B cell (primary cell): ENCODE measurements at regions of chr15 and their contacts with region 1.

Region 1: DNA sequence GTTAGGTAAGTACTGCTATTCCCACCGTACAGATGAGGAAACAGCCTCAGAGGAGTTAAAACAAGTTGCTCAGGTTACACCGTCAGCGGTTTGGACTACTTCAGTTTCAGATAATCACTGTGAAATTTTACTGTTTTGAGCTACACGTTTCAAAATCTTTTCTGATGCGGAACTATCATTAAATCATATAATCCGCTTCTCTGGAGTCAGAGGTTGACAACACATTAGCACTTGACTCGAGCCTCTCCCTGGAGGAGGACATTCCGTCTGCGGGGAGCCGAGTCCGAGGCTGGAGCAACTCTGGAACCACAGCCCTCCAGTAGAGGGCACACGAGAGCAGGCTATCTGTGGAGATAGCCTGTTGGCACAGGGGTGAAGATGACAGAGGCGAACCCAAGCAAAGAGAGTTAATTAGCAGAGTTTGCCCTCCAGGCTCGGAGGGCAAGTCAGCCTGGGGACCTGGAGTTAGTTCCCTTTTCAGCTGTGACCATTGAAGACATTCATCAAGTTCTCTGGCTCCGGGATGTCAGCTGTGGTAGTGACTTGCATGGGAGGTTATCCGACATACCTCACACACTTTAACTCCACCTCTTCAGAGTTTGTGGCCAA is 131.2 kb downstream of the IGF1R start:
- DNase-seq: peak; percentile 76
- ATAC-seq: peak; percentile 84
- H3K4me3 ChIP-seq: no peak overlapping the region
- H3K4me3 Mint-ChIP-seq: peak overlapping the region; percentile 24
- H3K27ac ChIP-seq: no peak overlapping the region
- H3K27ac Mint-ChIP-seq: no peak overlapping the region
- H3K4me1 ChIP-seq: peaks cover 15 to 30% of the 10 kb centered on the region in 2 donors
- H3K4me1 Mint-ChIP-seq: peaks cover 19% of the 10 kb centered on the region
- H3K27me3 ChIP-seq: no peaks in the 10 kb centered on the region
- H3K27me3 Mint-ChIP-seq: peaks cover 22% of the 10 kb centered on the region
- CTCF ChIP-seq: peak; percentile 97

Region 2: GRCh38 chr15:98663606-98664005 is 116.0 kb before region 1 on chr15:
- CTCF ChIA-PET with region 1: no interaction called
- POLR2A ChIA-PET with region 1: no interaction called
- intact Hi-C with region 1: no loop called
- DNase-seq: no peak
- ATAC-seq: no peak
- H3K4me3 ChIP-seq: no peak overlapping the region
- H3K4me3 Mint-ChIP-seq: no peak overlapping the region
- H3K27ac ChIP-seq: no peak overlapping the region
- H3K27ac Mint-ChIP-seq: no peak overlapping the region
- H3K4me1 ChIP-seq: no peaks in the 10 kb centered on the region
- H3K4me1 Mint-ChIP-seq: no peaks in the 10 kb centered on the region
- H3K27me3 ChIP-seq: no peaks in the 10 kb centered on the region
- H3K27me3 Mint-ChIP-seq: peaks cover 9% of the 10 kb centered on the region
- CTCF ChIP-seq: no peak

Region 3: GRCh38 chr15:98759316-98759715 is 20.3 kb before region 1 on chr15:
- CTCF ChIA-PET with region 1: no interaction called
- POLR2A ChIA-PET with region 1: no interaction called
- intact Hi-C with region 1: no loop called
- DNase-seq: no peak
- ATAC-seq: no peak
- H3K4me3 ChIP-seq: no peak overlapping the region
- H3K4me3 Mint-ChIP-seq: no peak overlapping the region
- H3K27ac ChIP-seq: no peak overlapping the region
- H3K27ac Mint-ChIP-seq: no peak overlapping the region
- H3K4me1 ChIP-seq: no peaks in the 10 kb centered on the region
- H3K4me1 Mint-ChIP-seq: peaks cover 1% of the 10 kb centered on the region
- H3K27me3 ChIP-seq: peaks cover 0 to 2% (median 0%) of the 10 kb centered on the region in 4 experiments
- H3K27me3 Mint-ChIP-seq: no peaks in the 10 kb centered on the region
- CTCF ChIP-seq: no peak

Region 4: DNA sequence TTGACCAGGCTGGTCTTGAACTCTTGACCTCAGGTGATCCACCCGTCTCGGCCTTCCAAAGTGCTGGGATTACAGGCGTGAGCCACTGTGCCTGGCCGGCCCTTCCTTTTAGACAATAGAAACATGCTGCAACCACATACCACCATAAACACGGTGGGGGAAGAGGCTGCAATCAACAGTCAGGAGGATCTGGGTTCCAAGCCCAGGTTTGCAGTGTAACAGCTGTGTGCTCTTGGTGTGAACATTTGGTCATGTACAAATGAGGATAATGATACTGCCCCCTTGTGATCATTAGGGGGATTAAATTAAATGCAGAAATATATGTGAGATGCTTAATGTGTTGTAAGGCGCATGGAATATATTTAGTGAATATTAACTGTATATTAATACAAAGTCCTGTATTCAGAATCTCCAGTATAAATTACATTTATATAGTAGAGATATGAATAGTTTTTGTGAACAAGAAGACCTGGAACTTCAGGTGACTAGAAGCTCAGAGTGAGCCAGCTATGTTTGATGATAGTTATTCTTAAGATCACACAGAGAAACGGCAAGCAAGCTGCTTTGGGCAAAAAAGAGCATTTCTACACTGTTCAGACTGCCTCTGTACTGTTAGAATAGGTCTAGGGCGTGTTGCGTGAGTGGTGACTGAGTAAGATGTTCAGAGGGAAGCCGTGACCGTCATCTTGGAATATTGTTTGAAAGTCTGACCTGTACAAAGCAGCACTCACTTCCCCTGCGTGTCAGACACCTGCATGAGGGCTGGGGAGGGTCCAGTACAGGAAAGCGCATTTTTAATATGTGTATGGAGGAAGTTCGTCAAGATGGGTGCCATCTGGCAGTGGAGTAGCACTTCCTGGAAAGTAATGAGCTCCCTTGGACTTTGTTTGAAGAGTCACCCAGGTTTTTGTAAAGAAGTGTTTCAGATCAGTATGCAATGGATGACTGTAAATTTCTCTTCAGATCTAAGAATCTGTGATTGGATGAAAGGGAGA is 102.3 kb after region 1 on chr15:
- CTCF ChIA-PET with region 1: interaction called, 70 read pairs
- POLR2A ChIA-PET with region 1: no interaction called
- intact Hi-C with region 1: loop called (anchors 1 kb)
- DNase-seq: peak; percentile 51
- ATAC-seq: peak; percentile 41
- H3K4me3 ChIP-seq: no peak overlapping the region
- H3K4me3 Mint-ChIP-seq: no peak overlapping the region
- H3K27ac ChIP-seq: no peak overlapping the region
- H3K27ac Mint-ChIP-seq: peak overlapping the region; percentile 0
- H3K4me1 ChIP-seq: peaks cover 4% of the 10 kb centered on the region in 2 donors
- H3K4me1 Mint-ChIP-seq: peaks cover 9% of the 10 kb centered on the region
- H3K27me3 ChIP-seq: no peaks in the 10 kb centered on the region
- H3K27me3 Mint-ChIP-seq: no peaks in the 10 kb centered on the region
- CTCF ChIP-seq: peak; percentile 75

Region 5: DNA sequence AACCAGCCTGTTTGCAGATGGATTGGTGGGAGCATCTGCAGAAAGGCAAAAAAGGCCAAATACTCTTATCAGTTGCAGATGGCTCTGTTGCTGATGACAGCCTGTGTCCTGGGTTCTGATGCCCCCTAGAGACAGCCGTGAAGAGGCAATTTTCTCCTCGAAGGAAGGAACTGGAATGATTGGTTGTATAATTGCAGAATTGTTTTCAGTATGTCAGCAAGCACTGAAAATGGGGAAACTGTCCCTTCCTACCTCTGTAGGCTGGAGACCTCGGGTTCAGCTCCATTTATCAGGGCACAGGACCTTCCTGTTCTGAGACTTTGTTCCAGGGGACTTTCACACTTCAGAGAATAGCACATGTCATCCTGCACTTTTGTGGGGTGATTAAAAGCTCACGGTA is 125.0 kb after region 1 on chr15:
- CTCF ChIA-PET with region 1: interaction called, 13 read pairs
- POLR2A ChIA-PET with region 1: no interaction called
- intact Hi-C with region 1: loop called (anchors 1 kb)
- DNase-seq: peak; percentile 26
- ATAC-seq: no peak
- H3K4me3 ChIP-seq: no peak overlapping the region
- H3K4me3 Mint-ChIP-seq: no peak overlapping the region
- H3K27ac ChIP-seq: no peak overlapping the region
- H3K27ac Mint-ChIP-seq: no peak overlapping the region
- H3K4me1 ChIP-seq: no peaks in the 10 kb centered on the region
- H3K4me1 Mint-ChIP-seq: no peaks in the 10 kb centered on the region
- H3K27me3 ChIP-seq: no peaks in the 10 kb centered on the region
- H3K27me3 Mint-ChIP-seq: no peaks in the 10 kb centered on the region
- CTCF ChIP-seq: no peak

Region 6: DNA sequence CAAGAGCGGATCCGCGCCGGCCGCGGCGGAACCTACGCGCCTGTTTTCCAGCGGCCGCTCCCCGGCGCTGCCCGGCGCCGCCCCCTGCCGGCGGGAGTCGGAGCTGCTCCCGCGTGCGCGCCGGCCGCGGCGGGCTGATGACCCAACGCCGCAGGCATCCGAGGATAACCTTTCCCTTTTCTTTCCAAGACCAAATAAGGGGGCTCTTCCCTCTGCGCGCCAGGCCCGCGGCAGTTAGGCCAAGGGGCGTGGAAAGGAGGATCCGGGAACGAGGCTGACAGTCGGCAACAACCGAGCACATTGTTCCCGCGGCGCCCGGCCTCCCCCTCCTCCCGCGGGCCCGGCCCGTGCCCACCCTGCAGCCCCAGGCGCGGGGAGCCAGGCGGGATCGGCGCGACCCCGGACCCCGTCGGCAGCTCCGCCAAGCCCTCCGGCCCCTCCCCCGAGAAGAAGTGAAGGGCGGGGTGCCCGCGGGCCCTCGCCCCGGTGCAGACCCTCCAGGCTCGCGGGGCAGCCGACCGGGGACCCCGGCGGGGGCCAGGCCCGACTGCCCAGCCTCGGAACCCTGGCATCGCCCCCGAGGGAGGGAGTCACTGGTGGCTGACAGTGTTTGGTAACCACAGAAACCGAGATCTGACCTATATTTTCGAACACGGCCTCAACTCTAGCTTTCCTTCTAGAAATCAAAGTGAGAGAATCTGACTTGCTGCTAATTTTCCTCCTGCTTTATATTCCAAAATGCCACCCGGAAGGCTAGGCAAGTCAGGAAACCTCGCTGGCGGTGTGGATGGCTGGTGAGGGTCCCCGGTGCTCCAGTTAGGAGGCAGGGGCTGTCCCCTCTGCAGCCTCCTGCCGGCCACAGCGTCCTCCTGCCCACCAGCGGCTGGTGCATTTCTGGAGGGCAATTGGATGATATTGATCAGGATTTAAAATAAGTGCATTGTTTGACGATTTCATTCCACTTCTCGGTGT is 279.7 kb after region 1 on chr15:
- CTCF ChIA-PET with region 1: interaction called, 3 read pairs
- POLR2A ChIA-PET with region 1: no interaction called
- intact Hi-C with region 1: loop called (anchors 5 kb)
- DNase-seq: peak; percentile 64
- ATAC-seq: peak; percentile 79
- H3K4me3 ChIP-seq: peak overlapping the region in 4 of 5 experiments; percentile 26 to 56 (median 49)
- H3K4me3 Mint-ChIP-seq: peak overlapping the region; percentile 79
- H3K27ac ChIP-seq: no peak overlapping the region
- H3K27ac Mint-ChIP-seq: peak overlapping the region; percentile 32
- H3K4me1 ChIP-seq: peaks cover 12 to 20% of the 10 kb centered on the region in 2 donors
- H3K4me1 Mint-ChIP-seq: peaks cover 18% of the 10 kb centered on the region
- H3K27me3 ChIP-seq: peaks cover 0 to 41% (median 19%) of the 10 kb centered on the region in 4 experiments
- H3K27me3 Mint-ChIP-seq: peaks cover 55% of the 10 kb centered on the region
- CTCF ChIP-seq: peak; percentile 72

Region 7: GRCh38 chr15:99213187-99213811 is 433.7 kb after region 1 on chr15:
- CTCF ChIA-PET with region 1: no interaction called
- POLR2A ChIA-PET with region 1: no interaction called
- intact Hi-C with region 1: loop called (anchors 2 kb)
- DNase-seq: peak; percentile 50
- ATAC-seq: peak; percentile 61
- H3K4me3 ChIP-seq: no peak overlapping the region
- H3K4me3 Mint-ChIP-seq: no peak overlapping the region
- H3K27ac ChIP-seq: no peak overlapping the region
- H3K27ac Mint-ChIP-seq: no peak overlapping the region
- H3K4me1 ChIP-seq: no peaks in the 10 kb centered on the region
- H3K4me1 Mint-ChIP-seq: no peaks in the 10 kb centered on the region
- H3K27me3 ChIP-seq: no peaks in the 10 kb centered on the region
- H3K27me3 Mint-ChIP-seq: no peaks in the 10 kb centered on the region
- CTCF ChIP-seq: peak; percentile 89

Region 8: GRCh38 chr15:99682455-99682854 is 902.9 kb after region 1 on chr15:
- CTCF ChIA-PET with region 1: no interaction called
- POLR2A ChIA-PET with region 1: no interaction called
- intact Hi-C with region 1: no loop called
- DNase-seq: no peak
- ATAC-seq: no peak
- H3K4me3 ChIP-seq: no peak overlapping the region
- H3K4me3 Mint-ChIP-seq: no peak overlapping the region
- H3K27ac ChIP-seq: peak overlapping the region; percentile 48 to 71
- H3K27ac Mint-ChIP-seq: peak overlapping the region; percentile 18
- H3K4me1 ChIP-seq: peaks cover 16 to 20% of the 10 kb centered on the region in 2 donors
- H3K4me1 Mint-ChIP-seq: peaks cover 50% of the 10 kb centered on the region
- H3K27me3 ChIP-seq: no peaks in the 10 kb centered on the region
- H3K27me3 Mint-ChIP-seq: no peaks in the 10 kb centered on the region
- CTCF ChIP-seq: no peak